ENCODE measurements at regions of chr14 and their contacts with region 1.

Region 1: GRCh38 chr14:94136575-94137331 is 7.3 kb upstream of the IFI27L2 start:
- DNase-seq: peak; percentile 71
- H3K4me3 ChIP-seq: no peak overlapping the region
- H3K27ac ChIP-seq: no peak overlapping the region
- H3K4me1 ChIP-seq: no peaks in the 10 kb centered on the region
- H3K27me3 ChIP-seq: no peaks in the 10 kb centered on the region
- CTCF ChIP-seq: peak; percentile 97 to 98

Region 2: DNA sequence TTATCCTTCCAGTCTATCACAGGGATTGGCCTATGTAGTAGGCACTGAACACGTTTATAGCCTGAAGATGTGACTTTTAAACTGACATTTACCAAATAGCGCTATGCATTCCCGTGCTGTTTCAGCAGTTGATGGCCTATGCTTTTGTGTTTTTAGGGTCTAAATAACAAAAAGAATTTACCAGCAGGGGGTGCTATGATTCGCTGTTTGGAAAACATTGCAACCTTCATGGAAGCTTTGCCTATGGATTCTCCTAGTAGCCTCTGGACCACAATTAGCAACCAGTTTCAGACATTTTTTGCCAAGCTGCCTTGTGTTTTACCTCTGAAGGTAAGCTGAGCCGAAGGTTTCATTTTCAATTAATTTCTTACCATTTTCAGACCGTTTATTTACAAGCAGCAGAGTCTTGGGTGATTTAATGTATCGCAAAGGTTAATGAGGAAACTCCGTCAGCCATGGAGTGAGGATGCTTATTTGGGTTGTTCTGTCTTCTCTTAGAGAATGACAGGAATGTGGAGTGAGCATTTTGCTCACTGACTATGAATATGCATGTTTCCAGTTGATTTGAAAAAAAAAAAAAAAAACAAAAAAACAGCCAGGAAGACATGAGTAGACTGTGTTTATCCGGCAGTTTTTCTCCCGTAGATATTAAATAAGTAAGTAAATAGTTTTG is 481.5 kb before region 1 on chr14:
- CTCF ChIA-PET with region 1: no interaction called
- dilution Hi-C with region 1: no loop called
- in situ Hi-C with region 1: no loop called
- intact Hi-C with region 1: loop called (anchors 5 kb)
- DNase-seq: peak; percentile 40
- H3K4me3 ChIP-seq: no peak overlapping the region
- H3K27ac ChIP-seq: no peak overlapping the region
- H3K4me1 ChIP-seq: no peaks in the 10 kb centered on the region
- H3K27me3 ChIP-seq: no peaks in the 10 kb centered on the region
- CTCF ChIP-seq: peak; percentile 39 to 57

Region 3: DNA sequence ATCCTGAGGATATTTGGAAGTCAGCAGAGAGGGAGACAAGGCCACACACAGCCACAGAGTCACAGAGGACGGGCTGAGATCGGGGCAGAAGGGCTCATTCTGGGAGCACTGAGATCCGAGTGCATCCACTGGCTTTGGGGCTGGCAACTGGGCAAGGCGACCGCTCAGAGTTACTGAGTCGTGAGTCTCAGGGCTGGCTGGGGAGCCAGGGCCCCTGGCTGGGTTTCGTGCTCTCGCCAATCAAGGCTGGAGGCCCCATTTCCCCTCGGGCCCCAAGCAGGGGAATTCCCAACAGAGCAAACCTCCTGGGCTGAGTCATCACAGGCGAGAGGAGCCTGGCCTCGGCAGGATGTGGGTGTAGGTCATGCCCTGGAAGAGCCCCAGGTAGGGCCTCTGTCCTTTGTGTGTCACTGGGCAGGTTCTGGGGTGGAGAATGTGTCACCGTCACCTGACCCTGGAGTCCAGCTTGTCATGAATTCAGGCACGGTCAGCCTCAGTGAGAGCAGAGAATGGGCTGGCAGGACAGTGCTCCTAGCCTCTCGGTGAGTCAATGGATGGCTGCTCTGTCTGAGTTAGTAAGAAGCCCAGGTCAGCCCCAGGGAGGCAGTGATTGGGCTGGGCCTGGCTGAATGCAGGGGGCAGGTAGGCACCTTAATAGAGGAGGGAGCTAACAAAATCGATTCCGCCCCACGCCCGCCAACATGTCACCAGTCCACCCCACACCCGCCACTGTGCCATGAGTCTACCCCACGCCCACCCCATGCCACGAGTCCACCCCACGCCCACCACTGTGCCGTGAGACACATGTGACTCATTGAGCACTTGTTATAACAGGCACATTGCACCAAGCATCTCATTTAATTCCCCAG is 177.3 kb before region 1 on chr14:
- CTCF ChIA-PET with region 1: no interaction called
- dilution Hi-C with region 1: no loop called
- in situ Hi-C with region 1: no loop called
- intact Hi-C with region 1: no loop called
- DNase-seq: peak; percentile 100
- H3K4me3 ChIP-seq: no peak overlapping the region
- H3K27ac ChIP-seq: peak overlapping the region; percentile 87
- H3K4me1 ChIP-seq: peaks cover 41% of the 10 kb centered on the region
- H3K27me3 ChIP-seq: no peaks in the 10 kb centered on the region
- CTCF ChIP-seq: no peak

Region 4: GRCh38 chr14:93970549-93970946 is 166.2 kb before region 1 on chr14:
- CTCF ChIA-PET with region 1: no interaction called
- dilution Hi-C with region 1: no loop called
- in situ Hi-C with region 1: no loop called
- intact Hi-C with region 1: no loop called
- DNase-seq: peak; percentile 42
- H3K4me3 ChIP-seq: no peak overlapping the region
- H3K27ac ChIP-seq: no peak overlapping the region
- H3K4me1 ChIP-seq: peaks cover 11% of the 10 kb centered on the region
- H3K27me3 ChIP-seq: no peaks in the 10 kb centered on the region
- CTCF ChIP-seq: peak; percentile 39 to 58

Region 5: DNA sequence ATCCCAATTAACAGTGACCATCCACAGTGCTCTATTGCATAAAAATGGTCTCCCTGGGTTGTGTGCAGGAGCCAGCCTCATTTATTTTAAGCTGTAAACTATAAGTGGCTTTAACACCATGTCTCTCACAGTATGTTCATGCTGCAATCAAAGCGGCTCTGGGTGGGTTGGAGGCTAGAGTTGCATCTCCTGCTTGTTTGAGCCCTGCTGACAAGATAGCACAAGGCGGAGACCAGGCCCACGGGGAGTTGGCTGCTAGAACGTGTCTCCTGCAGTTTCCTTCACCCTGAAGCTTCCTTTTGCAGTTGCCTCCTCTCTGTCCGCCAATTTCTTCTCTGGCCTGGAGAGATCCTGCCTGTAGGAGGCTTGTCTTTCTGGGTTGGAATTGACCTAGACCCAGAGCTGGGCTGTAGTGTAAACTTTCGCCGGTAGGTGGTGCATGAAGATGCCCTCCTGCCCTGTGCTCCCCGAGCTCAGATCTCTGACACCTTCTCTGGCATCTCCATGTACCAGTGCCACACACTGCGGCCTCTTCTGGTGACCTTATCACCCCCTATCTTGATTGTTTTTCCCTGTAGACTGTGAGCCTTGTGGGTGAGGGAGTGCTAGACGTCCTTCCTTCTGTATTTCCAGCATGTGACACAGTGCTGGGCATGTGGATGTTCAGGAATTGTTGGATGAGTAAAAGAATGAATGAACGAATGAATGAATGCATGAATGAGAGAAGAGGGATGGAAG is 100.3 kb before region 1 on chr14:
- CTCF ChIA-PET with region 1: interaction called, 9 read pairs
- dilution Hi-C with region 1: no loop called
- in situ Hi-C with region 1: loop called (anchors 5 to 10 kb)
- intact Hi-C with region 1: loop called (anchors 1 kb)
- DNase-seq: peak; percentile 46
- H3K4me3 ChIP-seq: no peak overlapping the region
- H3K27ac ChIP-seq: no peak overlapping the region
- H3K4me1 ChIP-seq: no peaks in the 10 kb centered on the region
- H3K27me3 ChIP-seq: no peaks in the 10 kb centered on the region
- CTCF ChIP-seq: peak; percentile 86 to 90

Region 6: GRCh38 chr14:94180655-94181271 is 44.0 kb after region 1 on chr14:
- CTCF ChIA-PET with region 1: interaction called, 22 read pairs
- dilution Hi-C with region 1: no loop called
- in situ Hi-C with region 1: no loop called
- intact Hi-C with region 1: loop called (anchors 1 kb)
- DNase-seq: peak; percentile 60
- H3K4me3 ChIP-seq: peak overlapping the region in 2 of 3 experiments; percentile 37 to 45
- H3K27ac ChIP-seq: peak overlapping the region; percentile 61
- H3K4me1 ChIP-seq: peaks cover 23% of the 10 kb centered on the region
- H3K27me3 ChIP-seq: no peaks in the 10 kb centered on the region
- CTCF ChIP-seq: peak; percentile 58 to 63

Region 7: DNA sequence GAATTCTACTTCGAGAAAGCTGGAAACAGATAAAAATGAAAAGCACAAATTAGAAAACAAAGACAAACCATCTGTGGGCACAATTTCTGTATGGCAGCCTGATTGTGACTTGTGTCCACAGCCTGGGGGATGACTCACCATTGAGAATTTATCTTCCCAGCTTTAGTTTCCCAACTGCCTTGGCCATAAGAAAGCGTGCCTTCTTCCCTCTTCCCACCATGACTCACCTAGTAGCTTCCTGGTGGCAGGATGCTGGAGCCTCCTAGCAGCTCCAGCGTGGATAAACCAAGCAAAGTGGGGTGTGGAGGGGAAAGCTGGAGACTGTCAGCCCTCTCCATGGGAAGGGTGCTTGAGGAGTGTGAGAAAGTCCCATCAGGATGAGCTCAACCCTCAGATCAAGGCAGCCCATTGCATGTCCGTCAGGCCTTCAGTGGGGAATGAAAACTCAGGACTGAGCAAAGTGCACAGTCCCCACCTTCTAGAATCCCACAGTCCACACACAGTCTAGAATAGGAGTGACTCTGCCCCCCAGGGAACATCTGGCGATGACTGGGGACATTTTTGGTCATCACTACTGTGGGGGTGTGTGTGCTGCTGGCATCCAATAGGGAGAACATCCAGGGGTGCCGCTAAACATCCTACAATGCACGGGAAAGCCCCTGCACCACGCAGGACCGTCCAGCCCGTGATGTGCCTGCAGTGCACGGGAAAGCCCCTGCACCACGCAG is 208.7 kb after region 1 on chr14:
- CTCF ChIA-PET with region 1: interaction called, 15 read pairs
- dilution Hi-C with region 1: no loop called
- in situ Hi-C with region 1: no loop called
- intact Hi-C with region 1: no loop called
- DNase-seq: peak; percentile 91
- H3K4me3 ChIP-seq: no peak overlapping the region
- H3K27ac ChIP-seq: peak overlapping the region; percentile 66
- H3K4me1 ChIP-seq: peaks cover 48% of the 10 kb centered on the region
- H3K27me3 ChIP-seq: no peaks in the 10 kb centered on the region
- CTCF ChIP-seq: no peak

Region 8: GRCh38 chr14:94689218-94689984 is 552.6 kb after region 1 on chr14:
- CTCF ChIA-PET with region 1: no interaction called
- dilution Hi-C with region 1: no loop called
- in situ Hi-C with region 1: no loop called
- intact Hi-C with region 1: loop called (anchors 10 kb)
- DNase-seq: peak; percentile 23
- H3K4me3 ChIP-seq: no peak overlapping the region
- H3K27ac ChIP-seq: no peak overlapping the region
- H3K4me1 ChIP-seq: peaks cover 4% of the 10 kb centered on the region
- H3K27me3 ChIP-seq: no peaks in the 10 kb centered on the region
- CTCF ChIP-seq: peak; percentile 80 to 99

Measured in mammary epithelial cell (primary cell).